H1 (cell line): ENCODE measurements at regions of chr2 and their contacts with region 1.

Region 1: DNA sequence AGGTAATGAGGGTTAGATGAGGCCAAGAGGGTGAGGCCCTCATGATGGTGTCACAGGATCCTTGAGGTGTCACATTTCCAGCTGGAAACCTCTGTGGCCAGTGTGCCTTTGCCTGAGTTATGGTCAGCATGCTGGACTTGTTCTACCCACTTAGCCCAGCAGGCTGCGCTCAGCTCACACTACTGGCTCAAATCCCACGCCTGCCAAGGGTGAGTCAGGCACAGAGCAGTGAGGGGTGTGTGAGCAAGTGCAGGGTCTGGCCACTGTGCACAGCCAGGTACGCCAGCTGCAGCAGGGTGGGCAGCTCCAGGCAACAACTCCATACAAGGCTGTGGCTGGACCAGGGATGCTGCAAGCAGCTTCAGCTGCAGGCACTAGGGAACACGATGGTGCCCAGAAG is 616.6 kb upstream of the FSHR start:
- DNase-seq: peak; percentile 56 to 87
- H3K4me3 ChIP-seq: no peak overlapping the region
- H3K27ac ChIP-seq: no peak overlapping the region
- H3K4me1 ChIP-seq: no peaks in the 10 kb centered on the region; a peak in 2 of 7 replicates
- H3K27me3 ChIP-seq: no peaks in the 10 kb centered on the region
- CTCF ChIP-seq: peak; percentile 96 to 99 (median 97)
- EP300 ChIP-seq: no peak
- POLR2A ChIP-seq: no peak
- RAD21 ChIP-seq: peak; percentile 100

Region 2: GRCh38 chr2:49737606-49738005 is 33.3 kb before region 1 on chr2:
- CTCF ChIA-PET with region 1: no interaction called
- POLR2A ChIA-PET with region 1: no interaction called
- DNase-seq: no peak
- H3K4me3 ChIP-seq: no peak overlapping the region
- H3K27ac ChIP-seq: no peak overlapping the region
- H3K4me1 ChIP-seq: no peaks in the 10 kb centered on the region
- H3K27me3 ChIP-seq: no peaks in the 10 kb centered on the region
- CTCF ChIP-seq: no peak
- EP300 ChIP-seq: no peak
- POLR2A ChIP-seq: no peak
- RAD21 ChIP-seq: no peak

Region 3: DNA sequence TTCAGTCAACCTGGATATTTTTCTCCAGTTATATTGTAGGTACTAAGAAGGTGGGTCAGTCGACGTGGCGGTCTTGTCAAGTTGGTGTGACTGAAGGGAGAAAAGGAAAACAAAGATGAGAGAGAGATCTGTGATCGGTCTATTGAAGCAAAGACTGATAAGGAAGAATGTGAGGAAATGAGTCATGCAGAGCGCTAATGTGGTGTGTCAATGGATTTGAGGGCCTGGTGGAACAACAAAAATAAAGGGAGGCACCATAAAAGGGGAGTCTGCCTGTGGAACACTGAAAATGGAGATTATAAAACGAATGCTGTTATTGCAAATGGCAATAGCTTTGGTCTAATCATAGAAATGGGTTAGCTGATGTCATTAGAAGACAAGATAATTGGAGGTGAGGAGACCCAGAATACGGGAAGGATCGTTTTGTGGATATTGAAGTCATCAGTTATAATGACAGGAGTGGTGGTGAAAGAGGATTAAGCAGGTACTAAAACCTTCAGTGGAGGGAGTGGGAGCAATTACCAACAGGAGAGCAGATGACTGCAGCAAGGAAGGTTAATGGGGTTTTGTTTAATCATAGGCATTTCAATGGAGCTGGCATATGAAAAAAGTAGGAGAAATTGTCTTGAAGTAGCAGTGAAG is 17.5 kb before region 1 on chr2:
- CTCF ChIA-PET with region 1: interaction called, 17 read pairs
- POLR2A ChIA-PET with region 1: no interaction called
- DNase-seq: no peak
- H3K4me3 ChIP-seq: no peak overlapping the region
- H3K27ac ChIP-seq: no peak overlapping the region
- H3K4me1 ChIP-seq: no peaks in the 10 kb centered on the region
- H3K27me3 ChIP-seq: no peaks in the 10 kb centered on the region
- CTCF ChIP-seq: no peak
- EP300 ChIP-seq: no peak
- POLR2A ChIP-seq: no peak
- RAD21 ChIP-seq: no peak

Region 4: DNA sequence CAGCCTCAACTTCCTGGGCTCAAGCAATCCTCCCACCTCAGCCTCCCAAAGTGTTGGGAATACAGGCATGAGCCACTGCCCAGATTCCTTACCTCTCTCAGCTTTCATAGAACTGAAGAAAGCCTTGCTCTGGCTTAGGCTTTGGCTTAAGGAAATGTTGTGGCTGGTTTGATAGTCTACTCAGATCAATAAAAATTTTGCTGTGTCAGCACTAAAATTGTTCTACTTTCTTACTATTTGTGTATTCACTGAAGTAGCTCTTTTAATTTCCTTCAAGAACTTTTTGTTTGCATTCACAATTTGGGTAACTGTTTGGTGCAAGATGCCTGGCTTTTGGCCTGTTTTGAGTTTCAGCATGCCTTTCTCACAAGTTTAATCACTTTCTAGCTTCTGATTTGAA is 17.4 kb after region 1 on chr2:
- CTCF ChIA-PET with region 1: interaction called, 18 read pairs
- POLR2A ChIA-PET with region 1: no interaction called
- DNase-seq: no peak
- H3K4me3 ChIP-seq: no peak overlapping the region
- H3K27ac ChIP-seq: no peak overlapping the region
- H3K4me1 ChIP-seq: no peaks in the 10 kb centered on the region
- H3K27me3 ChIP-seq: no peaks in the 10 kb centered on the region
- CTCF ChIP-seq: no peak
- EP300 ChIP-seq: no peak
- POLR2A ChIP-seq: no peak
- RAD21 ChIP-seq: no peak

Region 5: GRCh38 chr2:49843312-49843711 is 72.4 kb after region 1 on chr2:
- CTCF ChIA-PET with region 1: interaction called, 12 read pairs
- POLR2A ChIA-PET with region 1: no interaction called
- DNase-seq: no peak
- H3K4me3 ChIP-seq: no peak overlapping the region
- H3K27ac ChIP-seq: no peak overlapping the region
- H3K4me1 ChIP-seq: no peaks in the 10 kb centered on the region
- H3K27me3 ChIP-seq: no peaks in the 10 kb centered on the region
- CTCF ChIP-seq: peak in 2 of 3 experiments; percentile 19 to 35; a peak in 2 of 4 replicates
- EP300 ChIP-seq: no peak
- POLR2A ChIP-seq: no peak
- RAD21 ChIP-seq: peak; percentile 56 to 60

Region 6: DNA sequence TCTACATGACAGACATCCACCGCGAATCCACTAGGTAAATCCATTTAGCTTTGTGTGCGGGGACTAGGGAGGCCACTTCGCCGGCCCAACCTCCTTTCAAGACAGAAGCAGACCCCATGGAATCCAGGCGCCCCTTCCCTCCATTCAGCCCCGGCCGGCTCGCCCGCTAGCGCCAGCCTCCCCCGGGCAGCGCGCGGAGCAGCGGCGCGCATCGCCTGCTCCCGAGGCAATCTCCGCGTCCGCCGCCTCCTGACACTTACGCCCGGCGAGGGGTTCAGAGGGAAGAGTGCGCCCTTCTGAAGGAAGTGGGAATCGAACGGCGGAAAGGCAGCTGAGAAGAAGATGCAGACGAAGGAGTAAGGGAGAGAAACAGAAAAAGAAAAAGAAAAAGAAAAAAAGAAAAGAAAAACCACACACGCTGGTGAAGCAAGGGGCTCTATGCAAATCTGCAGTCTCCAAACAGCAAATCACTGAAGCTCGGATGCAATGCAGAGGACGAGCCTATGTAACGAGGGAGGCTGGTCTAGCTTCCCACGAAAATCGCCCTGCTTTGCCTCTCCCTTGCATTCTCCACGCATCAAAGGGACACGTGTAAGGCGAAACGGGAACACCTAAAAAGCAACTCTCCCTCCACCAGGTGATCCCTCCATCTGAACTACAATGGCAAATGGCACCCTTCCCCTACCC is 576.6 kb after region 1 on chr2:
- CTCF ChIA-PET with region 1: interaction called, 13 read pairs
- POLR2A ChIA-PET with region 1: no interaction called
- DNase-seq: peak in 1 of 2 experiments; percentile 68
- H3K4me3 ChIP-seq: peak overlapping the region; percentile 44 to 79 (median 66)
- H3K27ac ChIP-seq: no peak overlapping the region
- H3K4me1 ChIP-seq: peaks cover 3 to 12% (median 7%) of the 10 kb centered on the region in 4 experiments
- H3K27me3 ChIP-seq: peaks cover 0 to 34% (median 23%) of the 10 kb centered on the region in 4 experiments; a peak in 6 of 7 replicates
- CTCF ChIP-seq: 0 out of 4 replicates have a peak, but pooled peaks of 1 of the 3 experiments have one; percentile 2
- EP300 ChIP-seq: peak in 1 of 2 experiments; percentile 78; a peak in 1 of 3 replicates
- POLR2A ChIP-seq: peak in 1 of 2 experiments; percentile 29; a peak in 1 of 3 replicates
- RAD21 ChIP-seq: no peak

Region 7: GRCh38 chr2:50492477-50492851 is 721.5 kb after region 1 on chr2:
- CTCF ChIA-PET with region 1: interaction called, 36 read pairs
- POLR2A ChIA-PET with region 1: no interaction called
- DNase-seq: peak in 1 of 2 experiments; percentile 27
- H3K4me3 ChIP-seq: peak overlapping the region in 1 of 4 experiments; percentile 23; a peak in 1 of 8 replicates
- H3K27ac ChIP-seq: no peak overlapping the region
- H3K4me1 ChIP-seq: peaks cover 0 to 6% (median 2%) of the 10 kb centered on the region in 4 experiments; a peak in 3 of 7 replicates
- H3K27me3 ChIP-seq: no peaks in the 10 kb centered on the region
- CTCF ChIP-seq: peak; percentile 23 to 62 (median 58)
- EP300 ChIP-seq: no peak
- POLR2A ChIP-seq: no peak
- RAD21 ChIP-seq: peak; percentile 80 to 83

Region 8: GRCh38 chr2:50641633-50642032 is 870.7 kb after region 1 on chr2:
- CTCF ChIA-PET with region 1: no interaction called
- POLR2A ChIA-PET with region 1: no interaction called
- DNase-seq: no peak
- H3K4me3 ChIP-seq: no peak overlapping the region
- H3K27ac ChIP-seq: no peak overlapping the region
- H3K4me1 ChIP-seq: peaks cover 0 to 7% (median 0%) of the 10 kb centered on the region in 4 experiments; a peak in 1 of 7 replicates
- H3K27me3 ChIP-seq: no peaks in the 10 kb centered on the region
- CTCF ChIP-seq: no peak
- EP300 ChIP-seq: no peak
- POLR2A ChIP-seq: no peak
- RAD21 ChIP-seq: no peak